H1 (cell line): ENCODE measurements at regions of chr14 and their contacts with region 1.

Region 1: DNA sequence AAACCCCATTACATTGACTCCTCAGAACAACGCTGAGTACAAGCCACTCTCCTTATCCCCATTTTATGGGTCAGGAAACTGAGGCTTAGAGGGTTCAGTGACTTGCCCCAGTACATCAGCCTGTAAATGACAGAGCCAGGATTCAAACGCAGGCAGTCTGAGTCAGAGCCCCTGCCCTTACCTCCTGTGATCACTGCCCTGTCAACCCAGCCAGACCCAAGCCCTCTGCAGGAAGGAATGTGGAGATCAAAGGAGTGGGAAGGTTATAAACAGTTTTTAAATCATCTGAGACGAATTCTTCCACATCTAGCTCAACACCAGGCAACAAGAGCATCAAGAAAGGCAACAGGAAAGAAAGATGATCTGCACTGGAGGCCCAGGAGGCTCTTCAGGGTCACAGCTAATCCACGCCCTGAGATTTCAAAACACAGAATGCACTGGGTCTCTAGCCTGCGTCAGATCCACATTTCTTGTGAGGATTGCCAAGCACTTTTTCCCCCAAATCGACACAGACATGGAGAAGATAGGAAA is 38.5 kb downstream of the SPTB start:
- DNase-seq: peak in 1 of 2 experiments; percentile 21
- H3K4me3 ChIP-seq: no peak overlapping the region
- H3K27ac ChIP-seq: no peak overlapping the region
- H3K4me1 ChIP-seq: peaks cover 3 to 15% (median 6%) of the 10 kb centered on the region in 4 experiments; a peak in 3 of 7 replicates
- H3K27me3 ChIP-seq: no peaks in the 10 kb centered on the region
- CTCF ChIP-seq: peak; percentile 43 to 67 (median 54)
- EP300 ChIP-seq: no peak
- POLR2A ChIP-seq: no peak
- RAD21 ChIP-seq: peak; percentile 34 to 51

Region 2: GRCh38 chr14:64745511-64746091 is 95.6 kb before region 1 on chr14:
- CTCF ChIA-PET with region 1: no interaction called
- POLR2A ChIA-PET with region 1: no interaction called
- DNase-seq: no peak
- H3K4me3 ChIP-seq: no peak overlapping the region
- H3K27ac ChIP-seq: no peak overlapping the region
- H3K4me1 ChIP-seq: no peaks in the 10 kb centered on the region
- H3K27me3 ChIP-seq: no peaks in the 10 kb centered on the region
- CTCF ChIP-seq: peak in 1 of 3 experiments; percentile 25; a peak in 1 of 4 replicates
- EP300 ChIP-seq: no peak
- POLR2A ChIP-seq: no peak
- RAD21 ChIP-seq: peak; percentile 32 to 49; a peak in 2 of 4 replicates

Region 3: DNA sequence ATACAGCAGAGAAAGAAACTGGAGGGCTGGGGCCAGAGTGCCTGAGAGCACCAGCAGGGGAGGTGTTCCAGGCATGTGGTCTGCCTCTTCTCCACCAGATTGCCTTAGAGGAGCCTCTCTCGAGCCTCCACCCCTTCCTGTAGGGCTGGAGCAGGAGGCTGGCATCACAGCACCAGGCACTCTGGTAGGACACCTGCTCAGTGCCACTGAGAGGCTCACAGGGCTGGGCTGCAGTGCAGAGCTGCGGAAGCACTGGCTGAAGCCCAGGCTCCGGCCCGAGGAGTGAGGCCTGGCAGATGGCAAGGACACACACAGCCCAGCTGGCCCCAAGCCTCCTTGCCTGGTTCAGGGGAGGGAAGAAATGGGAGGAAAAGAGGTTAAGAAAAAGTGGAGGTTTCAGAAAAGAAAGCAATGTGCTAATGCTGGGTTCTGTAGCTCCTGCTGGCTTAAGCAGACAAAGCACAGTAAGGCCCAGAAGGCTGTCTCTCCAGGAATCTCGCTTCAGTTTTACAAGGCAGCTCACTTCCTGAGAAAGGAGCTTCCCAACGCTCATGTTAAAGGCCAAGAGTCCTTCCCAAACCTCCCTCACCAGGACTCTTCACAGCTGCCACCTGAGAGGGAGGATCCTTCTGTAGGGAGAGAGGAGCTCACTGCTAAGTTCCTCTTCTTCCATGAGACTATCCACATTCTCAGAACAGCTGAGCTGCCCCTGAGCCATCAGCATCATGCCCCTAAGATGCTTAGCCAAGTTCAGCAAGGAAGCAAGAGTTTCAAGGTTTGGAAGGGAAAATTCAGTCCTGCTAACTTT is 14.7 kb after region 1 on chr14:
- CTCF ChIA-PET with region 1: interaction called, 30 read pairs
- POLR2A ChIA-PET with region 1: interaction called, 4 read pairs
- DNase-seq: no peak
- H3K4me3 ChIP-seq: no peak overlapping the region
- H3K27ac ChIP-seq: no peak overlapping the region
- H3K4me1 ChIP-seq: peaks cover 12 to 19% (median 14%) of the 10 kb centered on the region in 4 experiments
- H3K27me3 ChIP-seq: no peaks in the 10 kb centered on the region
- CTCF ChIP-seq: no peak
- EP300 ChIP-seq: no peak
- POLR2A ChIP-seq: no peak
- RAD21 ChIP-seq: no peak

Region 4: GRCh38 chr14:64861916-64862315 is 20.7 kb after region 1 on chr14:
- CTCF ChIA-PET with region 1: interaction called, 30 read pairs
- POLR2A ChIA-PET with region 1: interaction called, 4 read pairs
- DNase-seq: no peak
- H3K4me3 ChIP-seq: no peak overlapping the region
- H3K27ac ChIP-seq: no peak overlapping the region
- H3K4me1 ChIP-seq: peaks cover 6 to 22% (median 10%) of the 10 kb centered on the region in 4 experiments; a peak in 5 of 7 replicates
- H3K27me3 ChIP-seq: no peaks in the 10 kb centered on the region; a peak in 1 of 7 replicates
- CTCF ChIP-seq: no peak
- EP300 ChIP-seq: no peak
- POLR2A ChIP-seq: no peak
- RAD21 ChIP-seq: no peak

Region 5: DNA sequence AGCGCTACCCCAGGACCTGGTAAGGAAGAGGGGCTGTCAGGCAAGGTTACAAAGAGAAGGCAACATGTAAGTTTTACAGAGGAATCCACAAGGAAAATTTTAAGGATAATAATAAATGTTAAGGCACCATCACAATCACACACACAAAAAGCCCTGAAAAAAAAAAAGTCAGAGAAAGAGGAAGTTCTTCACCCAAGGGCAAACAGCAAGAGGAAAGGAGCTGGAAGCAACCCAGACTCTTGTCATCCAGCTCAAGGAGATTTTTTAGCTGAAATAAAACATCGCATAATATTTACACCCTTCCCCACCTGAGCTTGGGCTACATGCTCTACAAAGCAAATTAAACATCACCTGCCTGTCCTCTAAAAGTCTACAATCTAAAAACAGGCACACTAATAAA is 29.0 kb after region 1 on chr14:
- CTCF ChIA-PET with region 1: interaction called, 13 read pairs
- POLR2A ChIA-PET with region 1: interaction called, 3 read pairs
- DNase-seq: no peak
- H3K4me3 ChIP-seq: no peak overlapping the region
- H3K27ac ChIP-seq: no peak overlapping the region
- H3K4me1 ChIP-seq: peaks cover 0 to 11% (median 3%) of the 10 kb centered on the region in 4 experiments; a peak in 3 of 7 replicates
- H3K27me3 ChIP-seq: no peaks in the 10 kb centered on the region; a peak in 2 of 7 replicates
- CTCF ChIP-seq: no peak
- EP300 ChIP-seq: no peak
- POLR2A ChIP-seq: no peak
- RAD21 ChIP-seq: no peak

Region 6: DNA sequence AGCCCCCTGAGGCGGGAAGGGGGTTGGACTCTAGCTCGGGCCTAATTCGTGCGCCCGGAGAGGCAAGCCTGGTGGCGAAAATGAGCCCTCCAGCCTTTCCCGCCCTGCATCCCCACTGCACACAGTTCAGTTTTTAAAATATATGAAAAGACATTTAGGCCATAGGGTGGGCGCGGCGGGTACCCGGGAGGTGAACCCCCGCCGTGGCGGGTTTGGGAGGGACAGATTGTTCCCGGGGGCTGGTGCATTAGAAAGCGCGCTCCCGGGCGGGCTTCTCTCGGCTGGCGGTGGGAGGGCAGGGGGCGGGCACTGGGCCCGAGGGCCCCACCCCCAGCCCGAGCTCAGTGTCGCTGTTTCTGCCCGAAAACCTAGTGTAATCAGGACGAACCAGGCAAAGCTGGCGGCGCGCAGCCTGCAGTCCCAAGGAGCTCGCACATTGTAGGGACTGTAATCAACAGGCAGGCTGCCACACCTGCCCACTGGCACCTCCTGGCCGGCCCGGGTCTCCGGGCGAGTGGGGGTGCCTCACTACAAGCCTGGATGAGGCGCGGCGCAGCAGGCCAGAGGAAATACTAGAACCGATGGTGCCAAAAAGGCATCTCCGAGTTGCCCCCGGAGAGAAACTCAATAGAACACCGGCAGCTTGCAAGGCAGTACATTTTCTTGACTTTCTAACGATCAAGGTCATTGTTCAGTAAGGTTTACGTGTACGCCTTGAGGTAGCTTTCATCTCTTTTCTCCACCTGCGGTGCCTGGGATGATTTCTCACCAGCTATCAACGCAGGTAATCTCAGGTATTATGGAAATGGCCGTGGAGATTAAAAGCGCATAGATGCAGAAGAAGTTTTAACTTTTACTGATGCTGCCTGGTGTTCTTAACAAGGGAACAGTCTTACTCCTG is 39.3 kb after region 1 on chr14:
- CTCF ChIA-PET with region 1: interaction called, 15 read pairs
- POLR2A ChIA-PET with region 1: no interaction called
- DNase-seq: peak in 1 of 2 experiments; percentile 88
- H3K4me3 ChIP-seq: peak overlapping the region; percentile 56 to 82 (median 66)
- H3K27ac ChIP-seq: no peak overlapping the region
- H3K4me1 ChIP-seq: peaks cover 0 to 3% (median 1%) of the 10 kb centered on the region in 4 experiments; a peak in 5 of 7 replicates
- H3K27me3 ChIP-seq: peaks cover 0 to 34% (median 24%) of the 10 kb centered on the region in 4 experiments; a peak in 6 of 7 replicates
- CTCF ChIP-seq: no peak
- EP300 ChIP-seq: no peak
- POLR2A ChIP-seq: peak in 1 of 2 experiments; percentile 28; a peak in 1 of 3 replicates
- RAD21 ChIP-seq: no peak

Region 7: DNA sequence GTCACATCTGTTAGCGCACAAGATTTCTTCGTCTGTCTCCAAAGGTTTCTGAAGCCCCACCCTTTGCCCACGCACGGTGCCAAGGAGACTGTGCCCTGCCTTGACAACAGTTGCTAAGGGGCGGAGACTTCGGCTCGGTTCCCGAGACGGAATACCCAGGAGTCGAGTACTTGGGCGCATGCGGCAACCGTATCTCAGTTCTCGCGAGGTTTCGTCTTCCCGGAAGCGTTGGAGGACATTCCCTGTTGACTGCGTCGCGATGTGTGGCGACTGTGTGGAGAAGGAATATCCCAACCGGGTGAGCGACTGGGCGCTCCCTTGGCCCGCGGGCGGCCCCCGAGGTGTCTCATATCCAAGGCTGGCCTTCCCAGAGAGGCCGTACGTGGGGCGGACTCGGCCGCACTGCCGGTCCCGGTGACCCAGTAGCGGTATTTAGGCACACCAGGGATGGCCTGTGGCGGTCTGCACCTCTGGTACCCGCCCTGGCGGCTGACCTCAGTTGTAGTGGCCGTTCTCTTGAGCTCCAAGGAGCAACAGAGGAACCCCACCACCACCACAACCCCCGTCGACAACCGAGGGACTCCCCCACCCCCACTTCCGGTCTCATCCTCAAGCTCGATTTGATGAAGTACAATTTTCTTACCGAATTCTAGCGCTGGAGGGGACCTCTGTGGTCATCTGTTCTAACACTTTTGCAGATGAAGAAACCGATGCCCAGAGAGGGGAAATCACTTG is 73.2 kb after region 1 on chr14 and contains the start of gene CHURC1:
- CTCF ChIA-PET with region 1: interaction called, 10 read pairs
- POLR2A ChIA-PET with region 1: no interaction called
- DNase-seq: peak; percentile 89 to 96
- H3K4me3 ChIP-seq: peak within 1 kb of the TSS; percentile 75 to 90 (median 89)
- H3K27ac ChIP-seq: peak within 1 kb of the TSS; percentile 86
- H3K4me1 ChIP-seq: peaks cover 0 to 4% (median 3%) of the 10 kb centered on the region in 4 experiments; a peak in 4 of 7 replicates
- H3K27me3 ChIP-seq: no peaks in the 10 kb centered on the region
- CTCF ChIP-seq: peak in 1 of 3 experiments; percentile 9; a peak in 1 of 4 replicates
- EP300 ChIP-seq: no peak
- POLR2A ChIP-seq: peak in 1 of 2 experiments; percentile 97; a peak in 2 of 3 replicates
- RAD21 ChIP-seq: 0 out of 4 replicates have a peak, but pooled peaks of 1 of the 2 experiments have one; percentile 4
- total RNA-seq, gene CHURC1: 50.2 and 55.6 TPM in 2 replicates

Region 8: GRCh38 chr14:65070455-65070976 is 229.3 kb after region 1 on chr14:
- CTCF ChIA-PET with region 1: no interaction called
- POLR2A ChIA-PET with region 1: no interaction called
- DNase-seq: no peak
- H3K4me3 ChIP-seq: no peak overlapping the region
- H3K27ac ChIP-seq: no peak overlapping the region
- H3K4me1 ChIP-seq: no peaks in the 10 kb centered on the region
- H3K27me3 ChIP-seq: no peaks in the 10 kb centered on the region
- CTCF ChIP-seq: no peak
- EP300 ChIP-seq: no peak
- POLR2A ChIP-seq: no peak
- RAD21 ChIP-seq: no peak